H1 (cell line): ENCODE measurements at regions of chr4 and their contacts with region 1.

Region 1: DNA sequence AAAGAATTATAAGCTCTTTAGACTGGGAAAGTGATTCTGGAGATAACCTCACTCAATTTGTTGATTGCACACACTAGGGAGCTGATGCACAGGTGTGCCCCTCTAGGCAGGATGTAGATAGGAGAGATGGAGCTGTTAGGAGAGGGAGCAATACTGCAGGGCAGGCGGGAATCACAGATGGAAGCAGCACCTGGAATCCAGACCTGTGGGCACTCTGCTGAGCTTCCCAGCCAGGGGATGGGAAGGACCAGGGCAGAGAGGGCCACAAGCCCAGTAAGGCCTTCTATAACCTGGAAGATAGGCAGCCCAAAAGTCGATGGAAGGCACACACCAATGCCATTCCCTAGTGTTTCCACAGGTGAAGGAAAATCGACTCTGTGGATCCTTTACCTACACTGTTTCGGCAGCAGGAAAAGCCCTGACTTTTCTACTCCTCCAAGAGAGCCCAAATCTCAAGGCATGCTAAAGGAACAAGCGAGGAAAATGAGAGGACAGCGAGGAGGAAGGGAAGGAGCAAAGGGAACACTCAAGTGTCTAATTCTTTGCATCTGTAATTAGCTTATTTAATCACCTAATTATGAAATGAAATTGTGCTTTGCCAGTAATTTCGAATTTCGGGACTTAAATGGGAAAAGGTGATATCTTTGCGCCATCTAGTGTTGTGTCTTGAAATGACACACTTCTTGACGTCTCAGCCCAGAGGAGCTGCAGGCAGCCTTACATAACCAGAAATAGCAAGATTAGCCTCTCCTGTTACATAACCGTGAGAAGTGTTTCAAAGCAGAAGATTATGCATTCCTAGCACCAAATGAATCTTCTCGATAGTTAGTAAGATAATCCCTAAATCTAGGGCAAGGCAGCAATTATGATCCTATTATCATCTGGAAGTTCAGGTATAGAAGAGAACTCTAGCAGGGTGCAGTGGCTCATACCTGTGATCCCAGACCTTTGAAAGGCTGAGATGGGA is 31.0 kb upstream of the TLR3 start:
- DNase-seq: no peak
- H3K4me3 ChIP-seq: no peak overlapping the region
- H3K27ac ChIP-seq: no peak overlapping the region
- H3K4me1 ChIP-seq: no peaks in the 10 kb centered on the region
- H3K27me3 ChIP-seq: no peaks in the 10 kb centered on the region
- CTCF ChIP-seq: peak; percentile 22 to 78 (median 71)
- EP300 ChIP-seq: no peak
- POLR2A ChIP-seq: no peak
- RAD21 ChIP-seq: peak; percentile 94 to 95

Region 2: GRCh38 chr4:185587427-185588161 is 450.4 kb before region 1 on chr4:
- CTCF ChIA-PET with region 1: interaction called, 12 read pairs
- POLR2A ChIA-PET with region 1: no interaction called
- DNase-seq: peak in 1 of 2 experiments; percentile 77
- H3K4me3 ChIP-seq: peak overlapping the region in 3 of 4 experiments; percentile 18 to 53 (median 29); a peak in 5 of 8 replicates
- H3K27ac ChIP-seq: peak overlapping the region; percentile 13; the same call in 1 of the 2 replicates
- H3K4me1 ChIP-seq: peaks cover 4 to 18% (median 10%) of the 10 kb centered on the region in 4 experiments
- H3K27me3 ChIP-seq: peaks cover 0 to 3% (median 1%) of the 10 kb centered on the region in 4 experiments; a peak in 2 of 7 replicates
- CTCF ChIP-seq: no peak
- EP300 ChIP-seq: no peak
- POLR2A ChIP-seq: no peak
- RAD21 ChIP-seq: no peak

Region 3: GRCh38 chr4:185634066-185634652 is 403.8 kb before region 1 on chr4:
- CTCF ChIA-PET with region 1: interaction called, 14 read pairs
- POLR2A ChIA-PET with region 1: no interaction called
- DNase-seq: no peak
- H3K4me3 ChIP-seq: no peak overlapping the region
- H3K27ac ChIP-seq: no peak overlapping the region
- H3K4me1 ChIP-seq: peaks cover 0 to 7% (median 3%) of the 10 kb centered on the region in 4 experiments; a peak in 3 of 7 replicates
- H3K27me3 ChIP-seq: no peaks in the 10 kb centered on the region
- CTCF ChIP-seq: peak in 2 of 3 experiments; percentile 27 to 67; a peak in 2 of 4 replicates
- EP300 ChIP-seq: no peak
- POLR2A ChIP-seq: no peak
- RAD21 ChIP-seq: peak; percentile 63 to 65

Region 4: GRCh38 chr4:186021461-186022167 is 16.4 kb before region 1 on chr4:
- CTCF ChIA-PET with region 1: interaction called, 32 read pairs
- POLR2A ChIA-PET with region 1: interaction called, 3 read pairs
- DNase-seq: peak in 1 of 2 experiments; percentile 77
- H3K4me3 ChIP-seq: no peak overlapping the region
- H3K27ac ChIP-seq: no peak overlapping the region
- H3K4me1 ChIP-seq: peaks cover 0 to 9% (median 3%) of the 10 kb centered on the region in 4 experiments; a peak in 4 of 7 replicates
- H3K27me3 ChIP-seq: peaks cover 0 to 2% (median 0%) of the 10 kb centered on the region in 4 experiments; a peak in 1 of 7 replicates
- CTCF ChIP-seq: peak; percentile 56 to 92 (median 89)
- EP300 ChIP-seq: no peak
- POLR2A ChIP-seq: no peak
- RAD21 ChIP-seq: peak; percentile 99 to 100

Region 5: GRCh38 chr4:186137196-186137794 is 99.3 kb after region 1 on chr4:
- CTCF ChIA-PET with region 1: interaction called, 13 read pairs
- POLR2A ChIA-PET with region 1: no interaction called
- DNase-seq: no peak
- H3K4me3 ChIP-seq: no peak overlapping the region
- H3K27ac ChIP-seq: no peak overlapping the region
- H3K4me1 ChIP-seq: peaks cover 4 to 7% (median 5%) of the 10 kb centered on the region in 4 experiments
- H3K27me3 ChIP-seq: no peaks in the 10 kb centered on the region
- CTCF ChIP-seq: peak in 2 of 3 experiments; percentile 40 to 51; a peak in 2 of 4 replicates
- EP300 ChIP-seq: no peak
- POLR2A ChIP-seq: no peak
- RAD21 ChIP-seq: peak; percentile 72 to 73